Heart right ventricle (tissue), 16 donors: ENCODE measurements at regions of chr7 and their contacts with region 1.

Region 1: DNA sequence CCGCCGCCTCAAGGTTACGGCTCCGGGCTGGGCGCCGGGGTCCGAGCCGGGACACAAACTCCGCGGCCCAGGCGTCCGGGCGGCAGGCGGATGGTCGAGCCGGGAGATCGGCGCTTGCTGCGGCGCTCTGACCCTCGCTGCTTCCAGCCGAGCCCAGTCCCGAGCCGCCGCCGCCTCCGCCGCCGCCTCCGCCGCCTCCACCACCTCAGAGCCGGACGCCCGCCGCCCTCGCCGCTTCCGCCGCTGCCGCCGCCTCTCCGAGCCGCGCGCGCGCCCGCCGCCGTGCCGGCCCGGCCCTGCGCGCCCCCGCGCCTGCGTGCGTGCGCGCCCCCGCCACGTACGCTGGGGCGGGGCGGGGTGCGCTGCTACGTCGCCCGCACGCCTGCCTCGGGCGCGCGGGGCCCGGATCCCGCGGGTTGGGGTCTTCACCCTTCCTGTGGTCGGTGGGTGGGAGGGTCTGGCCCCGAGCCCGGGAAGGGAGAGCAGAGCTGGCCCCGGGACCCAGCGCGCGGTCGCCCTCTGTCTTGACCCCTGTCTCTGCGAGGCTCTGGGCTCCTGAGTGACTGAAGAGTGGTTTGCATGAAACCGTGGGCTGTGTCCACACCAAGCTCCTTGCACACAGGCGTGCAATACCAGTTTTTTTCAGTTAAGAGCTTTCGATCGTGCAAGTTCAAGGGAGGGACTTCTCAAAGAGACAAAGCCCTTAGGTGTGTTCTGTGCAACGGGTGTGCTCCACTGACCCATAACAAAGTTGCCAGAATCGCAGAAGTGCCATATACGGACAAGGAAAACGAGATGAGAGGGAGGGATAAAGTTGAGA is at the start of gene SMURF1:
- DNase-seq: peak; percentile 62 to 78
- ATAC-seq: peak; percentile 46 to 84 (median 72)
- H3K4me3 ChIP-seq: peak within 1 kb of the TSS; percentile 69 to 100 (median 97)
- H3K27ac ChIP-seq: peak within 1 kb of the TSS; percentile 96 to 100 (median 97)
- H3K4me1 ChIP-seq: peaks cover 0 to 43% (median 27%) of the 10 kb centered on the region in 9 donors
- H3K27me3 ChIP-seq: no peaks in the 10 kb centered on the region
- CTCF ChIP-seq: peak in 3 of 9 donors; percentile 25 to 39 (median 34)
- total RNA-seq, gene SMURF1: 8.4 to 14.7 (median 11.5) TPM

Region 2: DNA sequence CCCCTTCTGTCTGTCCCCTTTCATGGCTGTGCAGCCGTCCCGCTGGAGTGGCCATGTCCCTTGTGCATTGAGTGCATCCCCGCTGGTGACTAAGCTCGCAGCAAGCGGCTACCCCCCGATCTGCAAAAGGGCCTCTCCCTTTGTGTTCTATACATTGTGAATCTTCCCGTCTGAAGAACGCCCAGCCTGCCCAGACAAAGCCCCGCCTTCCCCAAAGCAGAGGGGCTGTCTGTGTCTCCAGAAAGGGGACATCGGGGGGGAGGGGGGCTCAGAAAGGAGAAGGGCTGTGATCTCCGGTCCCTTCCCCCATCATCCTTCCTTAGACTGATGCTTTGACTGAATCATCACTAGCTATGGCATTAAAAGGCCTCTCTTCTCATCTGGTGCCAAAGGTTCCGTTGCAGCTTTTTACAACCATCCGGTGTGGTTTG is 515.0 kb before region 1 on chr7:
- intact Hi-C with region 1: no loop called
- DNase-seq: no peak
- ATAC-seq: no peak
- H3K4me3 ChIP-seq: no peak overlapping the region
- H3K27ac ChIP-seq: no peak overlapping the region
- H3K4me1 ChIP-seq: no peaks in the 10 kb centered on the region
- H3K27me3 ChIP-seq: peaks cover 0 to 52% (median 24%) of the 10 kb centered on the region in 7 donors
- CTCF ChIP-seq: no peak

Region 3: GRCh38 chr7:98974906-98975816 is 168.9 kb before region 1 on chr7:
- intact Hi-C with region 1: no loop called
- DNase-seq: peak; percentile 48 to 61
- ATAC-seq: peak; percentile 82 to 97 (median 93)
- H3K4me3 ChIP-seq: no peak overlapping the region
- H3K27ac ChIP-seq: peak overlapping the region in 9 of 10 donors; percentile 12 to 70 (median 56)
- H3K4me1 ChIP-seq: peaks cover 0 to 11% (median 0%) of the 10 kb centered on the region in 9 donors
- H3K27me3 ChIP-seq: no peaks in the 10 kb centered on the region
- CTCF ChIP-seq: no peak

Region 4: DNA sequence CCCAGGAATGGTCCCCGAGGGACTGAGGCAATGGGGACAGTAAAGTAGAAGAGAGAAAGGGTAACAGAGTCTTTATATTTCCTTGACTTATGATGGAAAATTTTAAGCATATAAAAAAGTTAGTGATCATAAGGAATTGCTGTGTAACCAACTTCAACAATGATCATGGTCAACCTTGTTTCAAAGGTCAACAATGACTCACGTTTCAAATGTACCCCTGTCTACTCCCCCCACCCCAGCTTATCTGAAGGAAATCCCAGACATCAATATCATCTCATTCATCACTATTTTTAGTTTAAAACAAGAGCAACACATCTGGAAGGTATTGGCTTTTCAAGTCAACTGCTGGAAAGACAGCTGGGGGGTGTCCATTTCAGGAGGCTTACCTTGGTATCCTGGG is 93.1 kb before region 1 on chr7:
- intact Hi-C with region 1: loop called in 3 of 10 experiments (anchors 10 kb)
- DNase-seq: no peak
- ATAC-seq: no peak
- H3K4me3 ChIP-seq: no peak overlapping the region
- H3K27ac ChIP-seq: no peak overlapping the region
- H3K4me1 ChIP-seq: no peaks in the 10 kb centered on the region
- H3K27me3 ChIP-seq: no peaks in the 10 kb centered on the region
- CTCF ChIP-seq: no peak

Region 5: DNA sequence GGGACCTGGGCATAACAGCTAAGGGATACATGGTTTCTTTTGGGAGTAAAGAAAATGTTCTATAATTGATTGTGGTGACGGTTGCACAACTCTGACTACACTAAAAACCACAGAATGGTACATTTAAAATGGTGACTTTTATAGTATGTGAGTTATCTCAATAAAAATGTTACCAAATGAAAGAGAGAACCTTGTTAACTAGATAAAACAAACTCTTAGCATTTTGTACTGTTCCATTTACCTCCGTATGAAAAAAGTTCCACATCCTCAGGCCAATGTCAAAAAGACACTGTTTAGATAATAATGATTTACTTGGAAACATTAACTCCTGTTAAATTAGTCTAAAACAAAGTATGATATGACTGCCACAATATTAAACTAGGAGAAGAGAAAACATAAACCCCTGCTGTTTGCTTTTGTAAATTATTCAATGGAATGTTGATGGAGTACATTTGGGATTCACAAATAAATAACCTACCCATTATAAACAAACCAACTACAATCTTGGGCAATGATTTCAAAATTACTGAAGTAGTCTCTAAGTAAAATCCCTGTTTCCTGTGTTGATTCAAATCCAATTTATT is 60.9 kb before region 1 on chr7:
- intact Hi-C with region 1: loop called in 1 of 10 experiments (anchors 10 kb)
- DNase-seq: no peak
- ATAC-seq: no peak
- H3K4me3 ChIP-seq: no peak overlapping the region
- H3K27ac ChIP-seq: no peak overlapping the region
- H3K4me1 ChIP-seq: peaks cover 3 to 38% (median 10%) of the 10 kb centered on the region in 9 donors
- H3K27me3 ChIP-seq: no peaks in the 10 kb centered on the region
- CTCF ChIP-seq: no peak

Region 6: GRCh38 chr7:99155213-99155612 is 11.2 kb after region 1 on chr7:
- intact Hi-C with region 1: no loop called
- DNase-seq: no peak
- ATAC-seq: no peak
- H3K4me3 ChIP-seq: no peak overlapping the region
- H3K27ac ChIP-seq: no peak overlapping the region
- H3K4me1 ChIP-seq: peaks cover 0 to 8% (median 0%) of the 10 kb centered on the region in 9 donors
- H3K27me3 ChIP-seq: no peaks in the 10 kb centered on the region
- CTCF ChIP-seq: no peak

Region 7: GRCh38 chr7:99312316-99313203 is 168.5 kb after region 1 on chr7:
- intact Hi-C with region 1: loop called in 2 of 10 experiments (anchors 5 to 10 kb)
- DNase-seq: peak; percentile 58 to 62
- ATAC-seq: peak in 7 of 8 donors; percentile 43 to 88 (median 74)
- H3K4me3 ChIP-seq: peak overlapping the region in 1 of 10 donors; percentile 19
- H3K27ac ChIP-seq: no peak overlapping the region
- H3K4me1 ChIP-seq: peaks cover 0 to 9% (median 2%) of the 10 kb centered on the region in 9 donors
- H3K27me3 ChIP-seq: no peaks in the 10 kb centered on the region
- CTCF ChIP-seq: peak; percentile 85 to 92 (median 90)